Aorta (tissue), 5 donors: ENCODE measurements at regions of chr6 and their contacts with region 1.

Region 1: DNA sequence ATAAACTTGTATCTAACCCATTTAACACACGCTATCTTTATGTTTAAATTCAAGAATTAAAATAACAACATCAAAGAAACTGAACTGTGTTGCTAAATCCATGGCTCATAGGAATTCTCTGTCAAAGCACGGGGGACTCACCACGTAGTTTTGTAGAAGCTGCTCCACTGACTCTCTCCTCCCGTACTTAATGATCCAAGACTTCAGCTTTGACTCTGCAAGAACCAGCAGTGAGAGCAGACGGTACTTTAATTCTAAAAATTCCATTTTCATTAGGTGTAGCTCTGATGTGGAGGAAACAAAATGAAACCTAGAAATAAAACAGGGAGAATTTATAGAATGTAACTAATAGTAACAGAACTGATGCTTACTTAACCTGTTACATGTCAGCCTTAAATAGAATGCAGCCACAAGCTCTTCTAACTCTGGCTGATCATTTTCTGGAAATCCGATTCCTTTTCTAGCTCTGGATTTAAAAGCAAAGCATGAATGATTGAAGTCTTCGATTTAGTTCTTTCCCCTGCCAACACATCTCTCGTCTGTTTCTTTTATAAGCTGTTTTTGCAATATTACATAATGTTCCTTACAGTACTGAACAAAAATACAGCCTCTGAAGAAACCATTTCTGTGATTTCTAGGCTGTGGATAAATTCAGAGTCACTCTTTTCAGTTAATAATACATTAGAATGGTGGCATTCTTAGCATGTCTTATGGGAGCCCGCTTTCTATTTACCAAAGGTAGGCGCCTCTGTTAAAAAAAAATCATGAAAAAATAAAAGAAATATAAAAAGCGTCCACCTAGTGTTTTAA is 165.5 kb downstream of the SYNE1 start:
- DNase-seq: no peak
- ATAC-seq: no peak
- H3K4me3 ChIP-seq: peak overlapping the region; percentile 64 to 69
- H3K27ac ChIP-seq: no peak overlapping the region
- H3K4me1 ChIP-seq: no peaks in the 10 kb centered on the region
- H3K27me3 ChIP-seq: no peaks in the 10 kb centered on the region

Region 2: DNA sequence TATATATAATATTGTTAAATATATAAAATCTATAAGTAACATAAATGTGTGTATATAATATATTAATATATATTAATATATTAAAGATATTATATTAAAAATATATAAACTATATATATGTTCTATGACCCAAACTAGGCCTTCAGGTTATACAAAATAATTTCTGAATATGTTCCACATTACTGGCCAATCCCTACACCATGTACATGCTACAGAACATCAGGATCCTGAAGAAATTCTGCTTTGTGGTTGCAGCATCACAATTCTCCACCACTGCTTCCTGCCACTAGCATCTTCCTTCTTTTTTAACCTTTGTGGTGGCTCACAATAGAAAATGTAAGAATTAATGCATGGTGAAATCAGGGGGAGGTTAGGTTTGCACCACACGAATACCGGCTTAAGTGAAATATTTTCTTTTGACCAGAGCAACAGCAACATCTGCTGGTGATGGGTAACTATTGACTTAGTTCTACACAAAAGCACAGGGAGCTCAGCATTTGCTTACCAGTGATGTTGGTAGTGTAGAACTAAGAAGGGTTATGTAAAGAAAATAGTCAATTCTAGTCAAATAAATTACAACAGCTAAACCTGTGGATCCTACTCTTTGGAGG is 115.1 kb before region 1 on chr6:
- intact Hi-C with region 1: no loop called
- DNase-seq: no peak
- ATAC-seq: peak; percentile 41
- H3K4me3 ChIP-seq: no peak overlapping the region
- H3K27ac ChIP-seq: no peak overlapping the region
- H3K4me1 ChIP-seq: no peaks in the 10 kb centered on the region
- H3K27me3 ChIP-seq: no peaks in the 10 kb centered on the region

Region 3: DNA sequence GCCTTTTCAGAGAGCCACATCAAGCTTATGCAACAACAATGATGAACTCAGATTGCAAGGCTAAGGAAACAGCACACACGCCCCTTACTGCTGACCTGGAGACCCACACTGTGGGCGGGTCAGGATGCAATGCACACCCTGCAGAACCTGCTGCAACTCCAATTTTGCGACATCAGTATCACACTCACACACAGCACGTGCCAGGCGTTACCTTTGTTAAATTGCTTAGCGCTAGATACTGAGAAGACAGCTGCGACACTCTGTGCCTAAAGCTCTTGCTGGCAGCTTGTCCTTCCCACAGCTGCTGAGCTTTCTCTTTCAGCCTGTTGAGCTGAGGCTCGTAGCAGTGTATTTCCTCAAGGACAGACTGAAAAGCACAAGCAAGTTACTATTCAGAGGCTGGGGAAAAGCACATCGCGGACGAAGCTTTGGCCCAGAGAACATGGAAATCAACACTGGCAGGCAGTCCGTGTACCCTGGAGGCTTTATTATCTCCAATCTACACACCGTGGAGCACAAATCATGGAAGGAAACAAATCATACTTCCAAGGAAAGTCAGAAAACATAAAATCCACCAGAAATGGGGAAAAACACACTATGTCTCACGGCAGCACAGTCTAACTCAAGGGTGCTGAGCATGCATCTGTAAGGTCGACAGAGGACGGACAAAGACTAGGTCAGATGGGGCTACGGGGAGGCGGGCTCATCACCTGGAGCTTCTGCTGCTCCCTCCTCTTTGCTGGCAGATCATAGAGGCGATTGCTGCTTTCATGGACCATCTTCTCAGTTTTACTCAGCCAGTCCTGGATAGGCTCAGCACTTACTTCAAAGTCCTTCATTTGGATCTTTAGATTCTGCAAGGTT is 102.7 kb before region 1 on chr6:
- intact Hi-C with region 1: loop called in 1 of 2 experiments (anchors 5 kb)
- DNase-seq: no peak
- ATAC-seq: peak; percentile 81
- H3K4me3 ChIP-seq: no peak overlapping the region
- H3K27ac ChIP-seq: peak overlapping the region in 1 of 2 donors; percentile 66
- H3K4me1 ChIP-seq: peaks cover 1 to 2% of the 10 kb centered on the region in 2 donors
- H3K27me3 ChIP-seq: no peaks in the 10 kb centered on the region

Region 4: GRCh38 chr6:152529369-152529768 is 57.7 kb after region 1 on chr6:
- intact Hi-C with region 1: no loop called
- DNase-seq: no peak
- ATAC-seq: no peak
- H3K4me3 ChIP-seq: no peak overlapping the region
- H3K27ac ChIP-seq: no peak overlapping the region
- H3K4me1 ChIP-seq: no peaks in the 10 kb centered on the region
- H3K27me3 ChIP-seq: no peaks in the 10 kb centered on the region